IMR-90 (cell line): ENCODE measurements at regions of chr12 and their contacts with region 1.

Region 1: DNA sequence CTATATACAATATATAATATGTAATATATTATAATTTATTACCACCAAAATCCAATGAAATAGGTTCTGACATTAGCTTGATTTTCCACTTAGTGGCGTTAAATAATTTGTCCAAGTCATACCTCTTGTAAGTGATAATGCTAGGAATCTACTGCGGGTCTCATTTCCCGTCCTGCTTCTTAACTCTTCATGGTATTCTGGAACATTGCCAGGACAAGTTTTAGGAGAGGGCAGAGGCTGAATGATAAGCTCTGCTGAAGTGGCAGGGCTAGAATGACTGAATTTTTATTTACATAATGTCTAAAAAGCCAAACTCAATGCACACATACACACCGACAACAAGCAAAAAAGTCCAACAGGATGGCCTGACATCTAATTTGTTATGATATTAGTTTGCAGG is 70.4 kb upstream of the PTPRQ start:
- DNase-seq: no peak
- ATAC-seq: no peak
- H3K4me3 ChIP-seq: no peak overlapping the region
- H3K27ac ChIP-seq: no peak overlapping the region
- H3K4me1 ChIP-seq: no peaks in the 10 kb centered on the region
- H3K27me3 ChIP-seq: no peaks in the 10 kb centered on the region
- CTCF ChIP-seq: no peak
- POLR2A ChIP-seq: no peak
- RAD21 ChIP-seq: no peak

Region 2: DNA sequence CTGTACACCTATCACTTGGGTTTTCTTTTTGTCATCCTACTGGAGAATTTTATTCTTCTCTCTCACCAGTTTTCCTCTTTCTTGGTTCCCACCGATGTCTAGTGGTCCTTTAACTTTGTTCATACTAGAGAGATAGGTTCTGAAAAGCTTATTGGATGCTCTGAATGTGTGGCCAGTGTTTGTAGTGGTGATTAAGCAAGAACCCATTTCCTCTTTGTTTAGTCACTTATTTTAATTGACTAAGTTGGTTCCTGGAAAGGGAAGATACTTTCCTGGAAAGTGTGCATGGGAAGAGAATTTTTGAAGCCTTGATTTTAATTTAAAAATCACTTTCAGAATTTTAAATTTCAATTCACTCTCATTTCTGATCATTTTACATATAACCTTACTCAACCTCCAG is 147.1 kb before region 1 on chr12:
- CTCF ChIA-PET with region 1: no interaction called
- POLR2A ChIA-PET with region 1: no interaction called
- dilution Hi-C with region 1: no loop called
- in situ Hi-C with region 1: no loop called
- intact Hi-C with region 1: no loop called
- DNase-seq: peak; percentile 68
- ATAC-seq: no peak
- H3K4me3 ChIP-seq: no peak overlapping the region
- H3K27ac ChIP-seq: no peak overlapping the region
- H3K4me1 ChIP-seq: no peaks in the 10 kb centered on the region
- H3K27me3 ChIP-seq: no peaks in the 10 kb centered on the region
- CTCF ChIP-seq: no peak
- POLR2A ChIP-seq: no peak
- RAD21 ChIP-seq: no peak

Region 3: DNA sequence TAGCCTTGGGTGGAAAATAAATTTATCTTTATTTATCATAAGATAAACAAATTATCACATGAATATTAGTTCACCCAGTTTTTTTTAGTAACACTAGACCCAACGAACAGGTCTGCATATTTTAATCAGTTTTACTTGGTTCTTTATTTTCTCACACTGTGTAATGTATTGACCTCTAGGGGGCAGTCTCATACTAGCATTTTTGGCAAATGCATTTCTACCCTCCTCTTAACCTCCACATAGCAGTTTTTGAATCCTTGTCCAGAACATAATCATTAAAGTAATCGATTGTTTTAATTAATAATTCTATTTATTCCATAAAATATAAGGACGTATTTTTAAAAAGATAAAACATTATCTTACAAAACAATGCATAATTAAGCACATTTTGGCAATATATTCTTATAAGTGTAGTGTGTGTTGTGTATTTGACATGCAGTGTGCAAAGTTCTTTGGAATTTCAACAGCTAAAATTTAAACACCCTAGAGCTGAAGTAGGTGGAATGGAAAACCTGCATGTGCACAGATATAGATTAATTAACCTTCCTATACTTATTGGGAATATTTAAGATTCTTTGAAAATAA is 38.8 kb after region 1 on chr12:
- CTCF ChIA-PET with region 1: no interaction called
- POLR2A ChIA-PET with region 1: no interaction called
- dilution Hi-C with region 1: no loop called
- in situ Hi-C with region 1: no loop called
- intact Hi-C with region 1: no loop called
- DNase-seq: peak; percentile 69
- ATAC-seq: peak; percentile 81
- H3K4me3 ChIP-seq: no peak overlapping the region
- H3K27ac ChIP-seq: no peak overlapping the region
- H3K4me1 ChIP-seq: no peaks in the 10 kb centered on the region
- H3K27me3 ChIP-seq: no peaks in the 10 kb centered on the region
- CTCF ChIP-seq: peak; percentile 87
- POLR2A ChIP-seq: no peak
- RAD21 ChIP-seq: peak; percentile 94

Region 4: DNA sequence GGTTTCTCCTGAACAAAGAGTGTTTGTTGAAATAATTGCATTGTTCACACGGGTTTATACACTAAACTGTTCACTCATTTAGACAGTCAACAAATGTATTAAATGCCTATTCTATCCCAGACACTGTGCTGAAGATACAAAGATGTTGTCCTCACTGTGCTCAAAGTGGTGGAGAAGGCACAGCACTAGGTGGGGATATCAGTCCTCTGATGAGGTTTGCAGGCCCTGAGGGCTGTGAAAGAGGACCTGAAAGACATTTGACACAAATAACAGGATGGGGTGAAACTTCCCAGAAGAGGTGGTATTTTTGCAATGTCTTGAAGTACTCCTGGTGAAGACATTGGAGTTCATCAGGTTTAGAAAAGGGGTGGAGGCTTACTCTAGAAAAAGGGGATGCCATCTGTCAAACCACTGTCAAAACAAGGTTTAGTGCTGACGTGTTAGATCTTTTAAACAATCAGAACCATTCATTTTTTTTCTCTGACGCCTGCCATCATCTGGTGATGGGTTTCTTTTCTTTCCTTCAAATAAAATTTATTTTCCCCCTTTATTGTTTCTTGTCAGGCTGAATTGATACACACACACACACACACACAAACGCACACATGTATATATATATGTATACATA is 773.7 kb after region 1 on chr12:
- CTCF ChIA-PET with region 1: no interaction called
- POLR2A ChIA-PET with region 1: interaction called, 12 read pairs
- dilution Hi-C with region 1: no loop called
- in situ Hi-C with region 1: no loop called
- intact Hi-C with region 1: no loop called
- DNase-seq: no peak
- ATAC-seq: no peak
- H3K4me3 ChIP-seq: no peak overlapping the region
- H3K27ac ChIP-seq: no peak overlapping the region
- H3K4me1 ChIP-seq: no peaks in the 10 kb centered on the region
- H3K27me3 ChIP-seq: no peaks in the 10 kb centered on the region
- CTCF ChIP-seq: no peak
- POLR2A ChIP-seq: no peak
- RAD21 ChIP-seq: no peak